CD8-positive, alpha-beta T cell (primary cell): ENCODE measurements at regions of chr9 and their contacts with region 1.

Region 1: DNA sequence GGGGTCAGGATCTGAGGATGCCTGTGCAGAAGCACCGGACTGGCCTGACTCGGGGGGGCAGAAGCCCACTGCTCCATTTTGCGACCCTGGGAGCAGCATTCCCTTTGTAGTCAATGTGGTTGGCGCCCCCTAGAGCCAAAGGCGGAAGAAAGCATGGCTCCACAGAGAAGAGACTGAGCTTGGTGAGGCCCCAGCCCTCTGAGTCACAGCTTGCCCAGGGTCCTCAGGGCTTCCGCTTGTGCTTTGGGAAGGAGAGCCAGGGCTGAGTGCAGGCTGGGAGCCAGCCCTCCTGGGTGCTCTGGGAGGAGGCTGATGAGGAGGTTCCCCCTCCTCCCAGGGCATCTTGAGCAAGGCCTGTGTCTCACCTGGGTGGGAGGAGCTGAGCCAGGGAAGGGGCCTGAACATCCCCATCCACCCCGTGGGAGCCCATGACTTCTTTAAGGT is 5.5 kb upstream of the AQP3 start:
- DNase-seq: peak in 8 of 9 experiments; percentile 32 to 67 (median 61)
- ATAC-seq: peak; percentile 70
- H3K4me3 ChIP-seq: no peak overlapping the region
- H3K4me3 Mint-ChIP-seq: no peak overlapping the region
- H3K27ac ChIP-seq: peak overlapping the region in 1 of 2 experiments; percentile 4
- H3K27ac Mint-ChIP-seq: peak overlapping the region; percentile 87
- H3K4me1 ChIP-seq: peaks cover 62% of the 10 kb centered on the region
- H3K4me1 Mint-ChIP-seq: peaks cover 62% of the 10 kb centered on the region
- H3K27me3 ChIP-seq: no peaks in the 10 kb centered on the region
- H3K27me3 Mint-ChIP-seq: no peaks in the 10 kb centered on the region
- CTCF ChIP-seq: peak; percentile 56

Region 2: DNA sequence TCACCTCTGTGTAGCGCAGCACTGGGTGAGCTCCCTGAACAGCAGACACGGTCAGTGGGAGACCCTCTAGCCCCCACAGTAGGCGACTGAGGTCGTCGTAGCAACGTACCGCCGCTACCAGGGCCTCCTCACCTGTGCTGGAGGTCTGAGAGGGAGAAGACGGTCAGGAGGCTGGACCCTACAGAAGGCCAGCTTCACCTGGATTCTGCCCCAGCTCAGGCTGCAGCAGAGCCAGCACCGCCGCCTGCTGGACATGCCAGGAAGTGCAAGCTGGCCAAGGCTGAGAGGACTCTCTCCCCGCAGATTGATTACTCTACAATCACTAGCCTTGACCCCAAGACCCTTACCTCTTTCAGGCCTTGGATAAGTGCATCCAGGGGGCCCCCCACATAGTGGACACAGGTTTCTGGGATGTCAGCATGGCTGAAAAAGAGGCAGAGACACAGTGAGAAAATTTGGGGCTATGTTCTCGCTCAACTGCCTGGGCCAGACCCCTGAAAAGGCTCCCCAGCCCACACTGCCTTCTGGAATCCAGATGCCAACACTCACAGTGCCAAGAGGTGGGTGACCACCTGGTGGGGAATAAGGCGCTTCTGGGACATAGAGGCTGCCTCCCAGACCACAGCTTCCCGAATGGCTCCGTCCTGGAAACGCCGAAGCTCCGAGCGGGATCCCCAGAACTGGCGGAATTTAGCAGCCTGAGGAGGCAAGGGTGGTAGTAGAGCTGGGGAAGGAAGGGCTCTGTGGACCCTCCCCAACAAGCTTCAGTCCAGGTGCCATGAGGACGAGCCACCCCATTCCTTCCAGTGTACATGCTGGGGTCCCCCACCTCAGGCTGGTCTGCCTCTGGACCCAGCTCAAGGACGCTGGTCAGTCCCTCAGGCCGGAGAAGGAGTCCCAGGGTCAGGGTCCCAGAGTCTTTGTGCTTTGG is 14.0 kb after region 1 on chr9:
- CTCF ChIA-PET with region 1: interaction called, 194 read pairs
- POLR2A ChIA-PET with region 1: interaction called, 18 read pairs
- intact Hi-C with region 1: no loop called
- DNase-seq: peak; percentile 42 to 85 (median 72)
- ATAC-seq: peak; percentile 93
- H3K4me3 ChIP-seq: no peak overlapping the region
- H3K4me3 Mint-ChIP-seq: no peak overlapping the region
- H3K27ac ChIP-seq: no peak overlapping the region
- H3K27ac Mint-ChIP-seq: peak overlapping the region; percentile 22
- H3K4me1 ChIP-seq: peaks cover 5% of the 10 kb centered on the region
- H3K4me1 Mint-ChIP-seq: peaks cover 10% of the 10 kb centered on the region
- H3K27me3 ChIP-seq: no peaks in the 10 kb centered on the region
- H3K27me3 Mint-ChIP-seq: no peaks in the 10 kb centered on the region
- CTCF ChIP-seq: peak; percentile 85

Region 3: GRCh38 chr9:33687779-33688178 is 234.9 kb after region 1 on chr9:
- CTCF ChIA-PET with region 1: no interaction called
- POLR2A ChIA-PET with region 1: no interaction called
- intact Hi-C with region 1: no loop called
- DNase-seq: no peak
- ATAC-seq: no peak
- H3K4me3 ChIP-seq: no peak overlapping the region
- H3K4me3 Mint-ChIP-seq: no peak overlapping the region
- H3K27ac ChIP-seq: no peak overlapping the region
- H3K27ac Mint-ChIP-seq: no peak overlapping the region
- H3K4me1 ChIP-seq: no peaks in the 10 kb centered on the region
- H3K4me1 Mint-ChIP-seq: no peaks in the 10 kb centered on the region
- H3K27me3 ChIP-seq: no peaks in the 10 kb centered on the region
- H3K27me3 Mint-ChIP-seq: peaks cover 25% of the 10 kb centered on the region
- CTCF ChIP-seq: no peak

Region 4: GRCh38 chr9:34346873-34347799 is 894.3 kb after region 1 on chr9:
- CTCF ChIA-PET with region 1: no interaction called
- POLR2A ChIA-PET with region 1: no interaction called
- intact Hi-C with region 1: no loop called
- DNase-seq: peak in 1 of 9 experiments; percentile 21
- ATAC-seq: no peak
- H3K4me3 ChIP-seq: no peak overlapping the region
- H3K4me3 Mint-ChIP-seq: no peak overlapping the region
- H3K27ac ChIP-seq: no peak overlapping the region
- H3K27ac Mint-ChIP-seq: no peak overlapping the region
- H3K4me1 ChIP-seq: no peaks in the 10 kb centered on the region
- H3K4me1 Mint-ChIP-seq: no peaks in the 10 kb centered on the region
- H3K27me3 ChIP-seq: no peaks in the 10 kb centered on the region
- H3K27me3 Mint-ChIP-seq: no peaks in the 10 kb centered on the region
- CTCF ChIP-seq: no peak

Region 5: DNA sequence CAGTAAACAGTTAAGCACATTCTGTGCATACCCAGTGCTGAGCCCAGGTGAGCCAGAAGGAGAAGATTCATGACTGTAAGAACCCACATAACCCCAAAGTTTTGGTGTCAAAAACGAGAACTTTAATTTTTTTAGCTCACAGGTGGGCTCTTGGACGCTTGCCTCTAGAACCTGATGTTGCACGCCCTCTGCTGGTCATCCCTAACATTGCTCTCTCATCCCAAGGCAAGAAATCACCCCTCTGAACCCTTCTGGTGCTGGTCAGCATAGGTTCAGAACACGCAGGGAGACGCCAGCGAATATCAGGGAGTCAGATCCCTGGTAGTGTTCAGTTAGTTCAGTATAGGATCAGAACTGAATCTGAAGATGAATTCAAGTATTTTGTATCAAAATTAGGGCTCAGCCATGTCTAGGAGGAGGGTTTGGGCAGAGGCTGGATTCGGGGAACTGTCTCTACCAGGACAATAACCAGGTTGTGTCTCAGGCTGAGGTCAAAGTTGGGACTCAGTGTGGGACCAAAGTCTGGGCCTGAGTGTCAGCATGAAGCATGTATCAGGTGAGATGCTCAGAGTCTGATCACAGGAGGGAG is 1532.6 kb after region 1 on chr9:
- CTCF ChIA-PET with region 1: no interaction called
- POLR2A ChIA-PET with region 1: no interaction called
- intact Hi-C with region 1: no loop called
- DNase-seq: peak in 8 of 9 experiments; percentile 29 to 76 (median 64)
- ATAC-seq: no peak
- H3K4me3 ChIP-seq: no peak overlapping the region
- H3K4me3 Mint-ChIP-seq: no peak overlapping the region
- H3K27ac ChIP-seq: no peak overlapping the region
- H3K27ac Mint-ChIP-seq: no peak overlapping the region
- H3K4me1 ChIP-seq: peaks cover 66% of the 10 kb centered on the region
- H3K4me1 Mint-ChIP-seq: peaks cover 66% of the 10 kb centered on the region
- H3K27me3 ChIP-seq: no peaks in the 10 kb centered on the region
- H3K27me3 Mint-ChIP-seq: no peaks in the 10 kb centered on the region
- CTCF ChIP-seq: peak; percentile 54